K562 (cell line): ENCODE measurements at regions of chr5 and their contacts with region 1.

Region 1: DNA sequence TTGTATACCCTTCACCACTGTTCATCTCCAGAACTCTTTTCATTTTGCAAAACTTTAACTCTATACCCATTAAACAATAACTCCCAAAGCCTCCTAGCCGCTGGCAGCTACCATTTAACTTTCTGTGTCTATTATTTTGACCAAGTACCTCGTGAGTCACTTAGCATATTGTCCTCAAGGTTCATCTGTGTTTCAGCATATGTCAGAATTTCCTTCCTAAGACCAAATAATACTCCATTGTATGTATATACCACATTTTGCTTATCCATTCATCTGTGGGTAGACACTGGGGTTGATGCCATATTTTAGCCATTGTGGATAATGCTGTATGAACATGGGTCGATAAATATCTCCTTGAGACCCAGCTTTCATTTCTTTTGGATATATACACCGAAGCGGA is 17.4 kb downstream of the ERBIN start:
- DNase-seq: no peak
- ATAC-seq: no peak; the same call in 2 of the 3 replicates
- H3K4me3 ChIP-seq: no peak overlapping the region
- H3K27ac ChIP-seq: no peak overlapping the region
- H3K4me1 ChIP-seq: peaks cover 0 to 3% of the 10 kb centered on the region in 2 experiments; a peak in 3 of 5 replicates
- H3K27me3 ChIP-seq: no peaks in the 10 kb centered on the region
- CTCF ChIP-seq: no peak
- EP300 ChIP-seq: no peak
- POLR2A ChIP-seq: no peak
- RAD21 ChIP-seq: no peak

Region 2: DNA sequence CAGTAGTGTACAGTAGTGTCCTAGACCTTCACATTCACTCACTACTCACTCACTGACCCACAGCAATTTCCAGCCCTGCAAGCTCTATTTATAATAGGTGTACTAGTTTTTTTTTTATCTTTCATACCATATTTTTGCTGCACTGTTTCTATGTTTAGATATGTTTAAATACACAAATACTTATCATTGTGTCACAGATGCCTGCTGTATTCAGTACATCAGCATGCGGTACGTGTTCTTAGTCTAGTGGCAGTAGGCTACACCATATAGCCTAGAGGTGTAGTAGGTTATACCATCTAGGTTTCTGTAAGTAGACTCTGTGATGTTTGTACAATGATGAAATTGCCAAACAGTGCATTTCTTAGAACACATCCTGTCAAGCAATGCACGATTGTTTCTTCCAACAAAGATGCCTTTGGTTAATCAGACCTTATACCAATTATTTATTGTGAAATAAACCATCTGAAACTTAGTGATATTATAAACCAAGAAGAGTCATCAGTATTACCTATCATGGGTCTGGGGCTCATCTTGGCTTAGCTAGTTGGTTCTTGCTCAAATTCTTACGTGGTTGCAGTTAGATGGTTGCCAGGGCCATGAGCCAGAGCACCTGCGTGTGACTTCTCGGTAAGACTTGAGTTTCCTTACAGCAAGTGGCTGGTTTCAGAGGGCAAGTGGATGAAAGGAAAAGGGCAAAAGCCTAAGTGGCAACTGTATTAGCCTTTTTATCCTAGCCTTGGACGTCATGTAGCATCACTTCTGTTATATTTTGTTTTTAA is 23.7 kb after region 1 on chr5:
- CTCF ChIA-PET with region 1: no interaction called
- POLR2A ChIA-PET with region 1: interaction called, 13 read pairs
- in situ Hi-C with region 1: no loop called
- intact Hi-C with region 1: no loop called
- DNase-seq: peak; percentile 53 to 83 (median 64)
- ATAC-seq: peak; percentile 84
- H3K4me3 ChIP-seq: no peak overlapping the region
- H3K27ac ChIP-seq: peak overlapping the region; percentile 73
- H3K4me1 ChIP-seq: peaks cover 21 to 50% of the 10 kb centered on the region in 2 experiments
- H3K27me3 ChIP-seq: no peaks in the 10 kb centered on the region
- CTCF ChIP-seq: no peak
- EP300 ChIP-seq: peak; percentile 84; the same call in 1 of the 2 replicates
- POLR2A ChIP-seq: no peak
- RAD21 ChIP-seq: no peak